ENCODE measurements at regions of chr1 and their contacts with region 1.

Region 1: DNA sequence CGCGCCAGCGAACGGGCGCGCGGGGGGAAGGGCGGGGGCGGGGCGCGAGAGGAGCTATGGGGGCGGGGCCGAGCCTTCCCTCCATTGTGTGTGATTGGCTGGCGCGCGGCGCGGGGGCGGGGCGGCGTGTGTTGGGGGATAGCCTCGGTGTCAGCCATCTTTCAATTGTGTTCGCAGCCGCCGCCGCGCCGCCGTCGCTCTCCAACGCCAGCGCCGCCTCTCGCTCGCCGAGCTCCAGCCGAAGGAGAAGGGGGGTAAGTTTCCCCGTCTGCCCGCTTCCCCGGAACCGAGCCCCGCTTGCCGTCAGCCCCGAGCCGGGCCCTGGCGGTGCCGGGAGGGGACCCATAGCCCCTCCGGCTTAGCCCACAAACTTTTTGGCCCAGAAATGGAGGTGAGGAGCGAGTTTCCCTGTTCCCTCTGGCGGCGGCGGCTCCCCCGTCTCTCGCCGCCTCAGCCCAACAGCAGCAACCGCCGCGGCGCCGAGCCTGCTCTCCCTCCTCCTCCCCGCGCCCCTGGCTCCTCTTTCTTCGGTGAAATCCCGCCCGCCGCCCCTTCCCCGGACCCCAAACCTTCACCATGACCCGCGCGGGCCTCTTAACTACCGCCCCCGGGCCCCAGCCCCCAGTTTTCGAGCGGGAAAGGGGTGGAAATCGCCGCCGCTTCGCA is at the start of gene H3-3A:
- DNase-seq: peak; percentile 99
- ATAC-seq: peak; percentile 93
- total RNA-seq, gene H3-3A: 285 to 316 TPM

Region 2: DNA sequence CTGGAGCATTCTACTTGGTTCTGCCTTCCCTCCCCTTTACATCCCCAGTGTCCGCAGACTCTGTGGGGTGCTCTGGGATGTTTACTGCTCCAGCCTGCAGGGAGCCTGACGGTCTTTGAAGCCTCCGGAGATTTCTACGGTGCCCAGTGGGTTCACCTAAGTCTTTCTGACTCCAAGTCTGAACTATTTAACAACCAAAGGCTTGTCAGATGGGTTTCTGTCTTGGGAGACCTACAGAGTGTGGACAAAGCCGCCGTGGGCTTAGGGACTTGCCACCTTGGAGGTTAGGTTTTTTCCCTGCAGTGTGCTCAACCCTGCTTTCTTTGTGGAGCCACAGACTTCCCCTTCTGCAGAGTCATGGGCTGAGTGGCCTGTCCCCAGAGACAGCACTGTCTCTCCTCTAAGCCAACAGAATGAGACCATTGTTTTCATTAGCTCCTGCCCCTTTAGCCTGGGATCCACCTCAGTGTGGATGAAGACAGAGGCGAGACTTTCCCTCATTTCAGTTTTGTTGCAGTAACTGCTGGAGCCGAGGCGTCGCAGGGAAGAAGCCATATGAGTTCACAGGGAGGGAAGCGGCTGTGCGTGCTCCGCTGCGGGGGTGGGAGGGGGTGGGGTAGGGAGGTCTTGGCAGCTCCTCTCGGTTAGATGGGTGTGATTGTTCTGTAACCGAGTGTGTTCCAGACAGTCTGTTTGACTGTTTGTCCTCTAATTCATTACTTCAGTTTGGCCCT is 1325.9 kb before region 1 on chr1:
- intact Hi-C with region 1: no loop called
- DNase-seq: peak; percentile 40
- ATAC-seq: peak; percentile 27 to 73

Region 3: DNA sequence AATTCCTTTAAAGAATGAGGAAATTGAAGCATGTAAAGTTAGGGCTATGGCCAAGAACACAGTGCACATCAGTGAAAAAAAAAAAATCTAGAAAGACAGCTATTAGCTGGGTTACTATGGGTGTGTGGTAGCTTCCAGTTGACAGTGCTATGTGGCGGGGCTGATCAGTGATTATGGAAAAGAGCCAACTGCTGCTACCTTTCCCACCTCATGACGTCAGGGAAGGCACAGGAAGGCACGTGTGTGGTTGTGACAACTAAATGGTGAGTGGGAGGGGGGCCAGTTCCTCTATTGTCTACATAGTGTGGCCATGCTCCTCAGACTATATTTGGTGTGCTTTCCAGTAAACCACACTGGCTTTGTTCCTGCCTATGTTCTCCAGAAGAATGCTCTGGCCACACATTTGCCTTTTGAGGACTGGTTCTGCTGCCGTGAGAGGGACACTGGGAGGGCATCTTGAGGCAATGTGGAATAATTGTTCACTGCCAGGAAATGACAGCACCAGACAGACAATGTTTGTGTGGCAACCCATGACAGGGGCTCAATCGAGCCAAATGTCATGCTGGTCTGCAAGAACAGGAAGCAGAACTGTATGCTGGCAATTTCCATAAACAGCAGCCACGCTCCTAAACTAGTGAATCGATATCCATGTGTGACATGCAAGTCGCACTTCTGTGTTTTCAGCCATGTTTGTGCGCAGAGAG is 60.6 kb before region 1 on chr1:
- intact Hi-C with region 1: loop called in 1 of 2 experiments (anchors 2 kb)
- DNase-seq: peak; percentile 83
- ATAC-seq: peak; percentile 3 to 32

Region 4: GRCh38 chr1:226109829-226110248 is 47.1 kb after region 1 on chr1:
- intact Hi-C with region 1: loop called in 1 of 2 experiments (anchors 1 kb)
- DNase-seq: peak; percentile 93
- ATAC-seq: peak; percentile 91 to 93

Region 5: GRCh38 chr1:226121587-226122400 is 59.1 kb after region 1 on chr1:
- intact Hi-C with region 1: loop called (anchors 2 to 5 kb)
- DNase-seq: peak; percentile 66
- ATAC-seq: peak; percentile 88 to 90

Region 6: GRCh38 chr1:226487921-226488546 is 425.3 kb after region 1 on chr1:
- intact Hi-C with region 1: no loop called
- DNase-seq: no peak
- ATAC-seq: no peak